A673 (cell line): ENCODE measurements at regions of chr22 and their contacts with region 1.

Region 1: GRCh38 chr22:44080936-44081861 is 57.1 kb downstream of the PARVB start:
- DNase-seq: peak; percentile 83
- H3K4me3 ChIP-seq: peak overlapping the region; percentile 20
- H3K27ac ChIP-seq: no peak overlapping the region
- H3K4me1 ChIP-seq: no peaks in the 10 kb centered on the region
- H3K27me3 ChIP-seq: no peaks in the 10 kb centered on the region
- CTCF ChIP-seq: peak; percentile 95

Region 2: GRCh38 chr22:43993027-43993760 is 88.0 kb before region 1 on chr22:
- CTCF ChIA-PET with region 1: interaction called, 20 read pairs
- POLR2A ChIA-PET with region 1: no interaction called
- intact Hi-C with region 1: loop called (anchors 5 kb)
- DNase-seq: peak; percentile 72
- H3K4me3 ChIP-seq: no peak overlapping the region
- H3K27ac ChIP-seq: no peak overlapping the region
- H3K4me1 ChIP-seq: peaks cover 3% of the 10 kb centered on the region
- H3K27me3 ChIP-seq: no peaks in the 10 kb centered on the region
- CTCF ChIP-seq: peak; percentile 95

Region 3: DNA sequence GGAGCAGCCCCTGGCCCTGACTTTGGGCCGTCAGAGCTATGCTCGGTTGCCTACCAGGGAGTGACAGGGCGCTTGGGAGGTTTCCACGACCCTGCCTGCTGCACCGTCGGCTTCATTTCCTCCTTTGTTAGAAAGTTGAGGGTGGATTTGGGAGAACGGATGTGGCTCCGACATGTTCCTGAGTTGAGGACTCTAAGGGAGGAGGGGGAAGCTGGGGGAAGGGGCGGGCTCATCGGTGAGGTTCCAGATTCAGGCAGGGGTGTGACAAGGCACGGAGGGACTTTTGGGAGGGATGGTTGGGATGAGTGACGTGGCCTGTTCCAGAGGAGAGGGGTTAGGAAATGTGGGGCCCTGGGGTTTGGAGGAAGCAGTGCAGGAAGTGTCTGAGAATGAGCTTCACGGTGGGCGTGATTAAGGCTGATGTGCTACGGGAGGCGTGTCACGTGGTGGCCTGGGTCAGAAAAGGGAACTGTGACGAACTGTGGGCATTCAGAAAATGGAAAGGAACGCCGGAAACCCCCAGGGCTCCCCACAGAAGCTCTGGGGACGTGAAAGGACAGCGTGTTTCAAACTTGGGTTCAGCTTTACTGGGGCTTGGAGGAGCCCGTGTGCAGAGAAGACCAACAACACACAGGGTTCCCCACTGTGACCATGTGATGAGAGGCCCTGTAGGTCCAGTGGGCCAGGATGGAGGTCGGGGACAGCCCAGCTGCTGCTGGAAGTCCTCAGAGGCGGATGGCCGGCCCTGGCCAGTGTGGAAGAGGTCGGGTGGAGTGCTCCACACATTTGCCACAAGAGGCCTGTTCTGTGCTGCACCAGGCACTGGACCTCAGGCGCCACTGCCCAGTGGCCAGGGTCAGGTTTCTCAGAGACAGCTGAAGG is 54.3 kb before region 1 on chr22:
- CTCF ChIA-PET with region 1: no interaction called
- POLR2A ChIA-PET with region 1: no interaction called
- intact Hi-C with region 1: no loop called
- DNase-seq: peak; percentile 93
- H3K4me3 ChIP-seq: peak overlapping the region; percentile 18
- H3K27ac ChIP-seq: peak overlapping the region; percentile 94
- H3K4me1 ChIP-seq: peaks cover 29% of the 10 kb centered on the region
- H3K27me3 ChIP-seq: no peaks in the 10 kb centered on the region
- CTCF ChIP-seq: no peak

Region 4: GRCh38 chr22:44357966-44358465 is 276.8 kb after region 1 on chr22:
- CTCF ChIA-PET with region 1: no interaction called
- POLR2A ChIA-PET with region 1: no interaction called
- intact Hi-C with region 1: loop called (anchors 2 kb)
- DNase-seq: no peak
- H3K4me3 ChIP-seq: no peak overlapping the region
- H3K27ac ChIP-seq: no peak overlapping the region
- H3K4me1 ChIP-seq: no peaks in the 10 kb centered on the region
- H3K27me3 ChIP-seq: no peaks in the 10 kb centered on the region
- CTCF ChIP-seq: no peak

Region 5: GRCh38 chr22:44625981-44626687 is 544.9 kb after region 1 on chr22:
- CTCF ChIA-PET with region 1: no interaction called
- POLR2A ChIA-PET with region 1: no interaction called
- intact Hi-C with region 1: loop called (anchors 1 kb)
- DNase-seq: peak; percentile 74
- H3K4me3 ChIP-seq: no peak overlapping the region
- H3K27ac ChIP-seq: no peak overlapping the region
- H3K4me1 ChIP-seq: no peaks in the 10 kb centered on the region
- H3K27me3 ChIP-seq: no peaks in the 10 kb centered on the region
- CTCF ChIP-seq: peak; percentile 97